Naive thymus-derived CD4-positive, alpha-beta T cell (primary cell): ENCODE measurements at regions of chr17 and their contacts with region 1.

Region 1: DNA sequence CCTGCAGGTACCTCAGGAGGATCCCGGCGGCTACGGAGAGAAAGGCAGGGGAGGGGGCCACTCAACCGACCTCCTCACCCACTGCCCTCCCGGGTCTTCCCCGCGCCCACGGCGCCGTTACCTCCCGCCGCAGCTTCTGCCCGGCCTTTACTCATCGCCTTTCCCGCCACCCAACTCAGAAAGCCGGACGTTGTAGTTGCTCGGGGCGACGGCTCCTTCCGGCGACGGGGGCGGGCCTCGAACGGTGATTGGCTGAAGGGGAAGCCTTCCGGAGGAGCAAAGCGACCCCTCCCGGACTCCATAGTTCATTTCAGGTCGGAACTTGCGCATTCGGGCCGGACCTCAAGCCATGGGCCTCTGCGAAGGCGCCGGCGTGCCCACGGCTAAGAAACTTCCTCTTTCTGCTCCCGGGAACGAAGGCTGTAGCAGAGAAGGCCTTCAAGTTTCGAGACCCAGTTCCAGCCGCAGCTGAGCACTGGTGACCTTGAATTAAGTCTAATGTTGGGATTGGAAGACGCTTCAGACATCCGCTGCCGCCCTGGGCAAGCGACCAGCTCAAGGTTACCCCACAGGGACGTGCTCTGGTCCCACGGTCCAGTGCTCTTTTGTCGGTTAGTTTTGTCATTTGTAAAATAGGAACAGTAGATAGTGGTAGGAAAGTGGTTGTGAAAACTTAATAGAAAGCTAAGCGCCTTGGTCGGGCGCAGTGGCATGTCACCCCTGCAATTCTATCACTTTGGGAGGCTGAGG is at the start of gene PSMC3IP:
- DNase-seq: peak; percentile 74 to 95 (median 85)
- ATAC-seq: peak; percentile 98
- H3K4me3 ChIP-seq: peak within 1 kb of the TSS; percentile 96
- H3K4me3 Mint-ChIP-seq: peak within 1 kb of the TSS; percentile 86 to 100 (median 96)
- H3K27ac ChIP-seq: peak within 1 kb of the TSS; percentile 87
- H3K27ac Mint-ChIP-seq: peak within 1 kb of the TSS; percentile 86 to 99 (median 96)
- H3K4me1 ChIP-seq: peaks cover 9 to 12% of the 10 kb centered on the region in 2 donors
- H3K4me1 Mint-ChIP-seq: peaks cover 17 to 53% (median 40%) of the 10 kb centered on the region in 7 donors
- H3K27me3 ChIP-seq: no peaks in the 10 kb centered on the region
- H3K27me3 Mint-ChIP-seq: no peaks in the 10 kb centered on the region
- total RNA-seq, gene PSMC3IP: 2.7 to 14.0 (median 5.2) TPM

Region 2: GRCh38 chr17:42381898-42382297 is 195.8 kb before region 1 on chr17:
- CTCF ChIA-PET with region 1: no interaction called
- POLR2A ChIA-PET with region 1: no interaction called
- intact Hi-C with region 1: no loop called
- DNase-seq: no peak
- ATAC-seq: no peak
- H3K4me3 ChIP-seq: no peak overlapping the region
- H3K4me3 Mint-ChIP-seq: peak overlapping the region in 4 of 10 donors; percentile 4 to 37 (median 26)
- H3K27ac ChIP-seq: no peak overlapping the region
- H3K27ac Mint-ChIP-seq: peak overlapping the region; percentile 18 to 79 (median 54)
- H3K4me1 ChIP-seq: peaks cover 27 to 29% of the 10 kb centered on the region in 2 donors
- H3K4me1 Mint-ChIP-seq: peaks cover 48 to 92% (median 82%) of the 10 kb centered on the region in 7 donors
- H3K27me3 ChIP-seq: no peaks in the 10 kb centered on the region
- H3K27me3 Mint-ChIP-seq: no peaks in the 10 kb centered on the region

Region 3: GRCh38 chr17:42428141-42428944 is 149.4 kb before region 1 on chr17:
- CTCF ChIA-PET with region 1: no interaction called
- POLR2A ChIA-PET with region 1: no interaction called
- intact Hi-C with region 1: no loop called
- DNase-seq: peak in 7 of 9 donors; percentile 30 to 58 (median 49)
- ATAC-seq: peak; percentile 79
- H3K4me3 ChIP-seq: no peak overlapping the region
- H3K4me3 Mint-ChIP-seq: no peak overlapping the region
- H3K27ac ChIP-seq: no peak overlapping the region
- H3K27ac Mint-ChIP-seq: no peak overlapping the region
- H3K4me1 ChIP-seq: peaks cover 0 to 3% of the 10 kb centered on the region in 2 donors
- H3K4me1 Mint-ChIP-seq: peaks cover 0 to 6% (median 3%) of the 10 kb centered on the region in 7 donors
- H3K27me3 ChIP-seq: peaks cover 2 to 5% of the 10 kb centered on the region in 2 donors
- H3K27me3 Mint-ChIP-seq: peaks cover 0 to 59% (median 5%) of the 10 kb centered on the region in 5 donors

Region 4: GRCh38 chr17:42493319-42493718 is 84.4 kb before region 1 on chr17:
- CTCF ChIA-PET with region 1: no interaction called
- POLR2A ChIA-PET with region 1: no interaction called
- intact Hi-C with region 1: no loop called
- DNase-seq: no peak
- ATAC-seq: no peak
- H3K4me3 ChIP-seq: no peak overlapping the region
- H3K4me3 Mint-ChIP-seq: no peak overlapping the region
- H3K27ac ChIP-seq: no peak overlapping the region
- H3K27ac Mint-ChIP-seq: no peak overlapping the region
- H3K4me1 ChIP-seq: peaks cover 4 to 9% of the 10 kb centered on the region in 2 donors
- H3K4me1 Mint-ChIP-seq: peaks cover 2 to 10% (median 8%) of the 10 kb centered on the region in 7 donors
- H3K27me3 ChIP-seq: no peaks in the 10 kb centered on the region
- H3K27me3 Mint-ChIP-seq: peaks cover 0 to 9% (median 3%) of the 10 kb centered on the region in 5 donors

Region 5: GRCh38 chr17:42536048-42536371 is 41.7 kb before region 1 on chr17 and contains the start of gene NAGLU:
- CTCF ChIA-PET with region 1: no interaction called
- POLR2A ChIA-PET with region 1: interaction called, 6 read pairs
- intact Hi-C with region 1: loop called in 1 of 2 experiments (anchors 1 kb)
- DNase-seq: peak; percentile 56 to 93 (median 69)
- ATAC-seq: peak; percentile 91
- H3K4me3 ChIP-seq: peak within 1 kb of the TSS; percentile 71
- H3K4me3 Mint-ChIP-seq: peak within 1 kb of the TSS; percentile 75 to 96 (median 86)
- H3K27ac ChIP-seq: peak within 1 kb of the TSS; percentile 57
- H3K27ac Mint-ChIP-seq: peak within 1 kb of the TSS; percentile 36 to 92 (median 79)
- H3K4me1 ChIP-seq: peaks cover 14 to 24% of the 10 kb centered on the region in 2 donors
- H3K4me1 Mint-ChIP-seq: peaks cover 29 to 50% (median 42%) of the 10 kb centered on the region in 7 donors
- H3K27me3 ChIP-seq: no peaks in the 10 kb centered on the region
- H3K27me3 Mint-ChIP-seq: peaks cover 0 to 9% (median 0%) of the 10 kb centered on the region in 5 donors
- total RNA-seq, gene NAGLU: 18.0 to 27.1 (median 22.3) TPM

Region 6: GRCh38 chr17:42554250-42555121 is 23.2 kb before region 1 on chr17:
- CTCF ChIA-PET with region 1: no interaction called
- POLR2A ChIA-PET with region 1: interaction called, 5 read pairs
- intact Hi-C with region 1: loop called in 1 of 2 experiments (anchors 2 kb)
- DNase-seq: peak; percentile 47 to 84 (median 68)
- ATAC-seq: peak; percentile 90
- H3K4me3 ChIP-seq: peak overlapping the region; percentile 80
- H3K4me3 Mint-ChIP-seq: peak overlapping the region; percentile 84 to 95 (median 90)
- H3K27ac ChIP-seq: peak overlapping the region; percentile 86
- H3K27ac Mint-ChIP-seq: peak overlapping the region; percentile 80 to 94 (median 91)
- H3K4me1 ChIP-seq: peaks cover 14 to 15% of the 10 kb centered on the region in 2 donors
- H3K4me1 Mint-ChIP-seq: peaks cover 8 to 44% (median 25%) of the 10 kb centered on the region in 7 donors
- H3K27me3 ChIP-seq: no peaks in the 10 kb centered on the region
- H3K27me3 Mint-ChIP-seq: no peaks in the 10 kb centered on the region

Region 7: DNA sequence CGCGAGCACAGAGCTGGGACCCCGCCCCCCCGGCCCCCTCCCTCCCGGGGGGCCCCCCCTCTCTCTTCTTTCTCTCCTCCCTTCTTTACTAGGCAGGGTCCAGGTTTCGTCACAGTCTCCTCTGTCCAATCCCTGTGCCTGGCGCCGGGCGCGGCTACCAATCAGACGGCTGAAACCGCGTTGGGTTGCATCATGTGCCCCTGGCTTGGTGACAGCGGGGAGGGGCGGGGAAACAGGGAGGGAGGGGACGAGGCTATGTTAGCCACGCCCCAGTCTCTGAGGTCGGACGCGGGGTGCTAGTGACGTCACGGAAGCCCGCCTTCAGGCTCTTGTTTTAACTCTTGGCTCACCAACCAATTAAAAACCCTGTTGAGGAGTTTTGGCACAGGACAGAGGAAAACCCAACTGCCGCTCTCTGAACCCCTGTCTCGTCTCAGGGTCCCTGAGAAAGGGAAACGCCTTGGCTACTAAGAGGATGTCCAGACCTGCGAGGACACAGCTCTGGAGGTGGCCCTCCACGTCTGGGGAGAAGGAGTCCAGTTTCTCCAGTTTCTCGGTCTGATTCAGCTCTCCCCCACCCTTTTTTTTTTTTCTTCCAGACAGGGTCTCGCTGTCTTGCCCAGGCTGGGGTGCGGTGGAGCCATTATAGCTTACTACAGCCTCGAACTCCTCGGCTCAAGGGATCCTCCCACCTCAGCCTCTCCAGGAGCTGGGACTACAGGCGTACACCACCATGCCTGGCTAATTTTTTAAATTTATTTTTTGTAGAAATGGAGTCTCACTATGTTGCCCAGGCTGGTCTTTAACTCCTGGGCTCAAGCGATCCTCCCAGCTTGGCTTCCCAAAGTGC is 99.5 kb after region 1 on chr17:
- CTCF ChIA-PET with region 1: interaction called, 30 read pairs
- POLR2A ChIA-PET with region 1: interaction called, 12 read pairs
- intact Hi-C with region 1: loop called (anchors 1 kb)
- DNase-seq: peak; percentile 80 to 98 (median 92)
- ATAC-seq: peak; percentile 90
- H3K4me3 ChIP-seq: peak overlapping the region; percentile 73
- H3K4me3 Mint-ChIP-seq: peak overlapping the region; percentile 79 to 94 (median 90)
- H3K27ac ChIP-seq: peak overlapping the region; percentile 64
- H3K27ac Mint-ChIP-seq: peak overlapping the region in 8 of 9 donors; percentile 7 to 91 (median 82)
- H3K4me1 ChIP-seq: peaks cover 47 to 57% of the 10 kb centered on the region in 2 donors
- H3K4me1 Mint-ChIP-seq: peaks cover 21 to 60% (median 50%) of the 10 kb centered on the region in 7 donors
- H3K27me3 ChIP-seq: peaks cover 5 to 21% of the 10 kb centered on the region in 2 donors
- H3K27me3 Mint-ChIP-seq: peaks cover 26 to 49% (median 36%) of the 10 kb centered on the region in 5 donors

Region 8: DNA sequence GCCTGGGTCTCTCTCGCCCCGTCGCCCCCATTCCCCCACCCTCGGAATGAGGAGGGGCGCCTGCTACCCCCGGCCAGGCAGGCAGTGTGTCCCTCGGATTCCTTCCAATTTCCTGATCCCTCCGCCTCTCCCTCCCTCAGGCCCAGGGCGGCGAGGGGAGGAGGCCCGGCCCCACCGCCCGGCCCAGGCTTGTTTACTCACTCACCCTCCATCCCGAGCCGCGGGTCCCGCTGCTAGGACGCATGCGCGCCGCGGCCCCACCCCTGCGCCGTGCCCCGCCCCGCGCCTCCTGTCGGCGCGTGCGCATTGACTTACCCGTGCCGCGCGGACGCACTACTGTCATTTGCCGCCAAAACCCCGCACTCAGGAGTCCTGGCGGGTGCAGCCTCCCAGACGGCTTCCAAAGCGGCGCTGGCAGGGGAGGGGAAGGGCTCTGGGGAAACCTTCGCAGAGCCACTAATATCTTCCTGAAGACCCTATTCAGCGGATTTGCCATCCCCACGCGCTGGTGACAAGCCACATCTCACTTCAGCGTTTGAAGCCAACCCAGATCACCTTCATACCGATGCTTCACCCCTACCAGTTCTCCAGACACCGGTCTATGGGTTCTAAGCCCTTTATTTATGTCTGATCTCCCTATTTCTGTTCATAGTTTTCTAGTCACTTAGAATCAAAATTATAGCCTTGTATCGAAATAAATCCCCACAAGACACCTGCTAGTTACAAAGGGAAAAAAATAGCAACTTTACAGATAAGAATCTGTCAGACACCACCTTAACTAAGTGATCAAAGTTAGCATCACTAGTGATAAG is 167.3 kb after region 1 on chr17 and contains the start of gene EZH1:
- CTCF ChIA-PET with region 1: no interaction called
- POLR2A ChIA-PET with region 1: no interaction called
- intact Hi-C with region 1: loop called in 1 of 2 experiments (anchors 5 kb)
- DNase-seq: peak; percentile 88 to 96 (median 94)
- ATAC-seq: peak; percentile 97
- H3K4me3 ChIP-seq: peak within 1 kb of the TSS; percentile 78
- H3K4me3 Mint-ChIP-seq: peak within 1 kb of the TSS; percentile 83 to 99 (median 94)
- H3K27ac ChIP-seq: peak within 1 kb of the TSS; percentile 90
- H3K27ac Mint-ChIP-seq: peak within 1 kb of the TSS; percentile 86 to 97 (median 94)
- H3K4me1 ChIP-seq: peaks cover 12 to 16% of the 10 kb centered on the region in 2 donors
- H3K4me1 Mint-ChIP-seq: peaks cover 15 to 34% (median 22%) of the 10 kb centered on the region in 7 donors
- H3K27me3 ChIP-seq: no peaks in the 10 kb centered on the region
- H3K27me3 Mint-ChIP-seq: peaks cover 0 to 41% (median 11%) of the 10 kb centered on the region in 5 donors
- total RNA-seq, gene EZH1: 50.9 to 212 (median 95.4) TPM